ENCODE measurements at regions of chr15 and their contacts with region 1.

Region 1: DNA sequence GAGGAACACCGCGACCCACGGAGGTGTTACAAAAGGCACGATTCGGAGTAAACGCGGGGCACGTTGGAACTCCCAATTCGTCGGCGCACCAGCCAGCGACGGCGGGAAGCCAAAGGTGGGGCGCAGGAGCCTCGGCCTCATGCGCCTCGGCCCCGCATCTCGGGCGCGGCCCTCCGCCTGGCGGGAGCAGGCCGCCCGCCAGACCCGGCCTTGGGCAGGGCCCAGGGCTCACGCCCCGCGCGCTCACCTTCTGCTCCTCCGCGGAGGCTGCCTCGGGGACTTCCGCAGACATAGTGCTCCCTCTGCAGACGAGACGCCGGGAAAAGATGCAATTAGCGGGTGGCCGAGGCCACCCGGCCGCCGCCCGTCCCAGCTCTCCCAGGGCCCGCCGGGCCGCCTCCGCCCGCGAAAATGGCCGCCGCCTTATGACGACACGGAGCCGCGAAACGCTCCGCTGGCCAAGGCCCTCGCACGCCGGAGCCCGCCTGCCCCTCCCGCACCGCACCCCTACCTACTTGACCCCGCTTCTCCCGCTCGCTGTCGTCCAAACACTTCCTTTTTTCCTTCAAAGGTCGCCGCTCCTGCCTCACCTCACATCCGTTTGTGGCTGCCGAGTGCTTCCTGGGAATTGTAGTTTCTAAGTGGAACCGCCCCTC is at the start of gene ARPP19:
- DNase-seq: peak; percentile 87
- ATAC-seq: peak; percentile 91
- H3K4me3 ChIP-seq: peak within 1 kb of the TSS; percentile 90
- H3K27ac ChIP-seq: peak within 1 kb of the TSS; percentile 95
- H3K4me1 ChIP-seq: peaks cover 6% of the 10 kb centered on the region; the same call in 1 of the 2 replicates
- H3K27me3 ChIP-seq: no peaks in the 10 kb centered on the region
- CTCF ChIP-seq: no peak
- total RNA-seq, gene ARPP19: 54.4 and 65.8 TPM in 2 replicates

Region 2: GRCh38 chr15:52509500-52510245 is 59.1 kb before region 1 on chr15:
- CTCF ChIA-PET with region 1: no interaction called
- POLR2A ChIA-PET with region 1: no interaction called
- intact Hi-C with region 1: no loop called
- DNase-seq: no peak
- ATAC-seq: no peak
- H3K4me3 ChIP-seq: no peak overlapping the region
- H3K27ac ChIP-seq: no peak overlapping the region
- H3K4me1 ChIP-seq: no peaks in the 10 kb centered on the region
- H3K27me3 ChIP-seq: no peaks in the 10 kb centered on the region
- CTCF ChIP-seq: no peak

Region 3: DNA sequence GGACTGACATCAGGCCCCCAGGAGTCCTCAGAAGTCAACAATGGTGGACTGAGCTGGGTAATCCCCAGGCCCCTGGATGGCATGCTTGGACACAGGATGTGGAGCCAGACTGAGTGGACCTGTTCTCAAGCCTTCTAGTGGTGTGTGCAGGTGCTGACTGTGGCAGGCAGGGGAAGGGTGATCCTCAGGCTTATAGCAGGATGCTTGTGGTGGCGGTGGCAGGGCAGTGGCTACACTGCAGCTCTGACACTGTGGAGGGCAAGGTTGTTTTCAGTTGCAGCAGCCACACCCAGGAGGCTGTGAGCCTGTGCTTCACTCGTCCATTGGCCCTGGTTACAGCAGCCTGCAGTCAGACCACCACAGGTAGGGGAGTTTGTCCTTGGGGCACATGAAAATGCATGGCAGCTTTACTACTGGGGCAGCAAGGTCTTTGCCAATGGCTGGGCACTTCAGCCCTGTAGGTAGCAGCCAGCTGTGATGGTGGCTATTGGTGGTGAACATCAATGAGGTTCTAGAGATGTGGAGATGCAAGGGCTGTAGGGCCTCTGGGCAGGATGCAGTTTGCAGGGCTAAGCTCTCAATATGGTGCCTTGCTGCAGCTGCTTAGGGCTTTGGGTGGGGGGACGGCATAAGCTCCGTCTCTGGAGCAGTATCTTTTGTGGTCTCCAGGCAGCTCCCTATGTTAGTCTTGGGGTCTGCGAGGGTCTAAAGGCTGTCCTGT is 22.5 kb before region 1 on chr15:
- CTCF ChIA-PET with region 1: no interaction called
- POLR2A ChIA-PET with region 1: interaction called, 23 read pairs
- intact Hi-C with region 1: no loop called
- DNase-seq: no peak
- ATAC-seq: peak; percentile 33; the same call in 1 of the 2 replicates
- H3K4me3 ChIP-seq: no peak overlapping the region
- H3K27ac ChIP-seq: no peak overlapping the region
- H3K4me1 ChIP-seq: no peaks in the 10 kb centered on the region
- H3K27me3 ChIP-seq: no peaks in the 10 kb centered on the region
- CTCF ChIP-seq: no peak

Region 4: GRCh38 chr15:52651868-52652267 is 83.1 kb after region 1 on chr15:
- CTCF ChIA-PET with region 1: no interaction called
- POLR2A ChIA-PET with region 1: no interaction called
- intact Hi-C with region 1: loop called (anchors 10 kb)
- DNase-seq: peak; percentile 71
- ATAC-seq: peak; percentile 84
- H3K4me3 ChIP-seq: peak overlapping the region; percentile 62
- H3K27ac ChIP-seq: peak overlapping the region; percentile 95
- H3K4me1 ChIP-seq: peaks cover 54% of the 10 kb centered on the region
- H3K27me3 ChIP-seq: no peaks in the 10 kb centered on the region
- CTCF ChIP-seq: no peak

Region 5: DNA sequence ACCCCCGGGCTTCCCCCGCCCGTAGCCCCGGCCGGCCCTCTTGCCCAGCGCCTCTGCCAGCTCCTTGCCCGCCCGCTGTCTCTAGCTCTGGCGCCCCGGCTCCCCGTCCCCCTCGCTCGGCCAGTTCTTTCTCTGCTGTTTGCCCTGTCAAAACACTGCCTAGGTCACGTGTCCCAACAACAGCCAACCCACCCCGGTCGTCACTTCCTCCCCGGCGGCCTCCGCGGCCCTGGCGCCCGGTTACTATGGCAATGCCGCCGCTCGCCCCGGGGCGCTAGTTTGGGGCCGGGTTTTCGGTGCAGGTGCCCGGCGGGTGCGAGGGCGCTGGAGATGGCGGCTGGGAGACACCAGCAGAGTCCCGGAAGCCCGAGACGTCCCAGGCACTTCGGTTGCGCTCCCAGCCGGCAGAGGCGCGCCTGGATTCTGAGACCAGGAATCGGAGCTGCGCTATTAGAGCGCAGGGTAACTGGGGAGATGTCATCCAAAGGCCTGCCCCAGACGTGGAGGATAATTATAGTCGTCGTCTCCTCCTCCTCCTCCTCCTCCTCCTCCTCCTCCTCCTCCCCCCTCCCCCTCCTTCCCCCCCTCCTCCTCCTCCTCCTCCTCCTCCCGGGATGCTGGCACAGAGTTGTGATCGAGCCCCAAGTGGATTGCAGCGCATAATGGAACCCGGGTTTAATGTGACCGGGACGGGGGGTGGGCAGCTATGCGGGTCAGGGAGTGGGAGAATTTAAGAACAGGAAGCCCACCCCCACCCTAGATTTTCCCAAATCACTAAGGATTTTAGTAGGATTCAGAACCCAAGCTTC is 110.7 kb after region 1 on chr15 and contains the start of gene ATOSA:
- CTCF ChIA-PET with region 1: no interaction called
- POLR2A ChIA-PET with region 1: no interaction called
- intact Hi-C with region 1: loop called (anchors 5 kb)
- DNase-seq: peak; percentile 73
- ATAC-seq: peak; percentile 78
- H3K4me3 ChIP-seq: peak within 1 kb of the TSS; percentile 80
- H3K27ac ChIP-seq: peak within 1 kb of the TSS; percentile 73
- H3K4me1 ChIP-seq: peaks cover 19% of the 10 kb centered on the region; the same call in 1 of the 2 replicates
- H3K27me3 ChIP-seq: no peaks in the 10 kb centered on the region
- CTCF ChIP-seq: no peak
- total RNA-seq, gene ATOSA: 6.5 and 8.7 TPM in 2 replicates

Region 6: DNA sequence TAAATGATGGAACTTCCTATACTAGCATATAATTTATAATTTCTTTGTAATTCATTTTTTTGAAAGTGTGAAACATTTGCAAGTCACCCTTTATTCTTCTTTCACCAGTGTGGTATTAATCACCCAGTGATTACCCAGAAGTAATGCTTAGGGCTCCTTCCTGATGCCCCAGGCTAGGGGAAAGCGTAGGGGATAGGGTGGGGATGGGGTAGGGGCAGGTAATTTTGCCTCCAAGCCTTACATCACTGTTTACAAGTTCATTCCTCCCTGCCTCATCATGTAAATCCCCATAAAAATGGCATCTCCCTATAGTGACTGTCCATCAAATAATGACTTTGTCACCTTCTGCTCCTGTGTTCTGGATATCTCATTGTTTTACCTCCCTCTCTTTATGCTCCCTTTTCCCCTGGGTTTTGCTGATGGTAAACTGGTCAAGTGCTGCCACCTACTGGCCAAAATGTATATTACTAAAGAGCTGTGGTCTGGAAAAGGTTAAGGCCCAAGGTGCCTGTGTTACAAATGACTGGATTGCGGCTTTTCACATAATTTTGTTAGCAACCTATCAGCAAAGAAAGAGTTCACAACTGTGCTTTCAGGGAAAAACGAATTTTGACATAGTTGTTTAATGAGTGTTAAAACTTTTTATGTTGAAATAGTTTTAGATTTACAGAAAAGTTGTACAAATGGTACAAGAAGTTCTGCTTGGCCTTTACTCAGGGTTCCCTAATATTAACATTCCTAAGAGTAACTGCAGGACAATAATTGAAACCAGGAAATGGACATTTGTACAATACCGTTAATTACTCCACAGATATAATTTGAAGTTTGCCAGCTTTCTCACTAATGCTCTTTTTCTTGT is 166.7 kb after region 1 on chr15:
- CTCF ChIA-PET with region 1: no interaction called
- POLR2A ChIA-PET with region 1: no interaction called
- intact Hi-C with region 1: loop called (anchors 10 kb)
- DNase-seq: peak; percentile 90
- ATAC-seq: peak; percentile 91
- H3K4me3 ChIP-seq: no peak overlapping the region
- H3K27ac ChIP-seq: no peak overlapping the region
- H3K4me1 ChIP-seq: no peaks in the 10 kb centered on the region
- H3K27me3 ChIP-seq: no peaks in the 10 kb centered on the region
- CTCF ChIP-seq: peak; percentile 87

Region 7: GRCh38 chr15:52893338-52893737 is 324.6 kb after region 1 on chr15:
- CTCF ChIA-PET with region 1: no interaction called
- POLR2A ChIA-PET with region 1: no interaction called
- intact Hi-C with region 1: no loop called
- DNase-seq: no peak
- ATAC-seq: no peak
- H3K4me3 ChIP-seq: no peak overlapping the region
- H3K27ac ChIP-seq: no peak overlapping the region
- H3K4me1 ChIP-seq: no peaks in the 10 kb centered on the region
- H3K27me3 ChIP-seq: peaks cover 19% of the 10 kb centered on the region; the same call in 1 of the 2 replicates
- CTCF ChIP-seq: no peak